Activated naive CD4-positive, alpha-beta T cell treated with anti-CD3 and anti-CD28 coated beads for 36 hours (primary cell): ENCODE measurements at regions of chr11 and their contacts with region 1.

Region 1: GRCh38 chr11:66022401-66023185 is 3.7 kb downstream of the CATSPER1 start:
- DNase-seq: peak; percentile 81
- H3K4me3 Mint-ChIP-seq: peak overlapping the region; percentile 42
- H3K27ac Mint-ChIP-seq: no peak overlapping the region
- H3K4me1 Mint-ChIP-seq: peaks cover 5% of the 10 kb centered on the region
- H3K27me3 Mint-ChIP-seq: peaks cover 5% of the 10 kb centered on the region

Region 2: DNA sequence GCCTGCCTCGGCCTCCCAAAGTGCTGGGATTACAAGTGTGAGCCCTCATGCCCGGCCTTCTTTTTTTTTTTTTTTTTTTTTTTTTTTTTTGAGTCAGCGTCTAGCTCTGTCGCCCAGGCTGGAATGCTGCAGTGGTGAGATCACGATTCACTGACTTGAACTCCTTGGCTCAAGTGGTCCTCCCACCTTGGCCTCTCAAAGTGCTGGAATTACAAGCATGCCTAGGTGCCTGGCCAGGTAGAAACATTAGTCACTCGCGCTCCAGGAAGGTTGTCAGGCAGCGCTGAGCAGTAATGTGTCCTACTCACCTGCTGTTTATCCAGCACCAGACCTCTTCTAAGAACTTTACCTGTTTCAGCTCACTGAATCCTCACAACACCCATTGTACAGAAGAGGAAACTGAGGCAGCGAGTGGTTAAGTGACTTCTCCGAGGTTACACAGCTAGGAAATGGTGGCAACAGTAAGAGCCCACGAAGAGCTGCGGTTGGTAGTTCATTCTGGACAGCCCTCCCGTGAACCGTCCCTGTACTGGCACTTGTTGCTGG is 11.3 kb before region 1 on chr11:
- CTCF ChIA-PET with region 1: interaction called, 20 read pairs
- intact Hi-C with region 1: no loop called
- DNase-seq: no peak
- H3K4me3 Mint-ChIP-seq: no peak overlapping the region
- H3K27ac Mint-ChIP-seq: no peak overlapping the region
- H3K4me1 Mint-ChIP-seq: peaks cover 7% of the 10 kb centered on the region
- H3K27me3 Mint-ChIP-seq: peaks cover 12% of the 10 kb centered on the region

Region 3: DNA sequence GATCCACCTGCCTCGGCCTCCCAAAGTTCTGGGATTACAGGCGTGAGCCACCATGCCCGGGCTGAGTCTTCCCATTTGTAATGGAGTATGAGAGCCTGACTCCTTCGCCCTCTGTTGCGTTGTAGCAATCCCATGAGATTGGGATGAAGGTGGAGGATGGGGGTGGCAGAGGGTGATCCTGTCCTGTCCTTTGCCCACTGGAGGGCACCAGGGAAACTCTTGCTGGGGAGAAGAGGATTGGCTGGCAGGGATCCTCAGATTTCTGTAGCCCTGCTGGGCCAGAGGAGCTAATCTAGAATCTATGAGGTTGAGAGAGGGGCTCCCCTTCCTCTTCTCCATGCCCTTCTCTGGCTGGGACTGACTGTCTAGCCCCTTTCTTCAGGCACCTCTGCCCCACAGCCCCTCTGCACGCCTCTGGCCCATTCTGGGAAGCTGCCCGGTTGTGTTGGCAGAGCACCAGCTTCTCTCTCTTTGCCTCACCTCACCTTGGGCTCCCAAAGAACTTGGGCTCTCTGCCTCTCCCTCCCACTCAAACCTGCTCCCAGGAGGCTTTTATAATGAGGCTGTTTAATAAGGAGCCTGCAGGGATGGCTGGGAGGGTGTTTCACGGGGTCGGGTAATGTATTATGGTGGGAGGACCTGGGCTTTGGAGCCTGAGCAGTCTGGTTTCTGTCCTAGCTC is 13.2 kb after region 1 on chr11:
- CTCF ChIA-PET with region 1: interaction called, 10 read pairs
- intact Hi-C with region 1: no loop called
- DNase-seq: no peak
- H3K4me3 Mint-ChIP-seq: no peak overlapping the region
- H3K27ac Mint-ChIP-seq: no peak overlapping the region
- H3K4me1 Mint-ChIP-seq: no peaks in the 10 kb centered on the region
- H3K27me3 Mint-ChIP-seq: peaks cover 3% of the 10 kb centered on the region

Region 4: GRCh38 chr11:66045177-66045639 is 22.6 kb after region 1 on chr11:
- CTCF ChIA-PET with region 1: interaction called, 14 read pairs
- intact Hi-C with region 1: no loop called
- DNase-seq: peak; percentile 88
- H3K4me3 Mint-ChIP-seq: peak overlapping the region; percentile 12
- H3K27ac Mint-ChIP-seq: peak overlapping the region; percentile 42
- H3K4me1 Mint-ChIP-seq: peaks cover 19% of the 10 kb centered on the region
- H3K27me3 Mint-ChIP-seq: peaks cover 7% of the 10 kb centered on the region

Region 5: DNA sequence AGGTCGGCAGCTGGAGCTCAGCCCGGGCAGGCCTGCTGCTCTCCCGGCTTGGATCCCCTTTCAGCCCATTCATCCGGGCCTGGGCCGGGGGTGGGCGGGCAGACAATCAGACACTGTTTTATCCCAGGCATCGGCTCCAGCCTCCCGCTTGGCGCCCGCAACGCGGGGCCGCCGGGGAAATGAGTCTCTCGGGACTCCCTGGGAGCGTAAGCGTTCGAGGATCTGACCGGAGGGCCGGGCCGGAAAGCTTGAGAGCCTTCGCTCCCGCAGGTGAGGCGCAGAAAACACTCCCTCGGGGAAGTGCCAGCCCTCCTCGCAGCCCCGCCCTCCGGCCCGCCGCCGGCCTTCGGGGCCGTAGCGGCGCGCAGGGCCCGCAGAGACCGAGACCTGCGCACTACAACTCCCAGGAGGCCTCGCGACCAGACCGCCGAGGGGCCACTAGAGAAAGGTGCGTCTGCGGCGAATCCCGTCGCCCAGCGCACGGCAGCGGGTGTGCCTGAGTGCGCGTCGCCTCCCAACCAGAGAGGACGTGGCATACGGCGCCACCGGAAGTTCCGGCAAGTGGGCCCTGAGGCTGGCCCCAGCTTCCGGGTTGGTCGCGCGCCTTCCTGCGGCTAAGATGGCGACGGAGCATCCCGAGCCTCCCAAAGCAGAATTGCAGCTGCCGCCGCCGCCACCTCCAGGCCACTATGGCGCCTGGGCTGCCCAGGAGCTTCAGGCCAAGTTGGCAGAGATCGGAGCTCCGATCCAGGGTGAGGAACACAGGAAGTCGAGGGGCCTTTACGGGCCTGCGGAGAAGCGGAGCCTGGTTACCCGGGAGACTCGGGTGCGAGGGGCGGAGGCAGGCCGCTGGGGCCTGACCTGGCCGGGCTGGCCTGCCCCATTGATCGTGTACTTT is 29.4 kb after region 1 on chr11 and contains the start of gene SF3B2:
- CTCF ChIA-PET with region 1: interaction called, 16 read pairs
- intact Hi-C with region 1: no loop called
- DNase-seq: peak; percentile 98
- H3K4me3 Mint-ChIP-seq: peak within 1 kb of the TSS; percentile 99
- H3K27ac Mint-ChIP-seq: peak within 1 kb of the TSS; percentile 96
- H3K4me1 Mint-ChIP-seq: peaks cover 41% of the 10 kb centered on the region
- H3K27me3 Mint-ChIP-seq: peaks cover 7% of the 10 kb centered on the region
- total RNA-seq, gene SF3B2: 319 to 321 TPM